Naive thymus-derived CD8-positive, alpha-beta T cell (primary cell): ENCODE measurements at regions of chr17 and their contacts with region 1.

Region 1: DNA sequence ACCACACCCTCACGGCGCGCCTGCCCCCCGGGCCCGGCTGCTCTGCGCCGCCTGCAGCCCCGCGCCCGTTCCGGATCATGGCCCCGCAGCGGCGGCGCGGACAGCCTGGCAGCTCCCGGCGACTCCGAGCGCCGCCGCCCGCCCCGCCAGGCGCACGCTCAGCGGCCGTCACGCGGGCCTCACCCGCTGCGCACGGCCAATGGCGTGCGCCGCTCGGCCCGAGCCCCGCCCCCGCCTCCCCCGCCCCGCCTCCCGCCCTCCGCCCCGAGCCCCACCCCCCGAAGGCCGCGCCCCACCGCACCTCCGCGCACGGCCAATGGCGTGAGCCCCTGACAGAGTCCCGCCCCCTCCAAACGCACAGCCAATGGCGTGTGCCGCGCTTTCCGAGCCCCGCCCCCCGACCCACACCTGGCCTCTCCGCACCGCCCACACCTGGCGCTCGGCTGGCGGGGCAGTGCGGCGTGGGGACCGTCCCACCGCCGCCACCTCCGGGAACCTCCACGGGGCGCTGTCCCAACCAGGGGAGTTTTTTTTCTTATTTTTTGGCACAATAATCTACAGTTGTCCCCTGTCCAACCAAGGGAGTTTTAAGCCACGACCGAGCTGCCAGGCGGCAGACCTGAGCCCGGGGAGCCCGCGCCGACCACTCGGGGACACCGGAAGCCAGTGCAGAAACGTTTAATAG is at the start of gene PCYT2:
- DNase-seq: peak; percentile 85 to 96 (median 92)
- ATAC-seq: peak; percentile 91 to 96
- H3K4me3 Mint-ChIP-seq: peak within 1 kb of the TSS; percentile 69 to 91 (median 84)
- H3K27ac Mint-ChIP-seq: peak within 1 kb of the TSS in 7 of 10 donors; percentile 39 to 84 (median 71)
- H3K4me1 Mint-ChIP-seq: peaks cover 3 to 26% (median 13%) of the 10 kb centered on the region in 4 donors
- H3K27me3 Mint-ChIP-seq: no peaks in the 10 kb centered on the region
- polyA plus RNA-seq, gene PCYT2: 22.9 to 24.0 (median 23.7) TPM

Region 2: GRCh38 chr17:81890447-81891299 is 20.7 kb before region 1 on chr17:
- POLR2A ChIA-PET with region 1: interaction called, 16 read pairs
- DNase-seq: no peak
- ATAC-seq: no peak
- H3K4me3 Mint-ChIP-seq: peak overlapping the region; percentile 80 to 93 (median 85)
- H3K27ac Mint-ChIP-seq: peak overlapping the region; percentile 66 to 97 (median 96)
- H3K4me1 Mint-ChIP-seq: peaks cover 13 to 36% (median 24%) of the 10 kb centered on the region in 4 donors
- H3K27me3 Mint-ChIP-seq: no peaks in the 10 kb centered on the region

Region 3: GRCh38 chr17:81944858-81945257 is 33.4 kb after region 1 on chr17:
- POLR2A ChIA-PET with region 1: no interaction called
- DNase-seq: no peak
- ATAC-seq: no peak
- H3K4me3 Mint-ChIP-seq: no peak overlapping the region
- H3K27ac Mint-ChIP-seq: no peak overlapping the region
- H3K4me1 Mint-ChIP-seq: peaks cover 0 to 2% (median 1%) of the 10 kb centered on the region in 4 donors
- H3K27me3 Mint-ChIP-seq: peaks cover 0 to 7% (median 0%) of the 10 kb centered on the region in 5 donors